Naive thymus-derived CD4-positive, alpha-beta T cell (primary cell): ENCODE measurements at regions of chr14 and their contacts with region 1.

Region 1: GRCh38 chr14:97458661-97459579 is 661.7 kb downstream of the VRK1 start:
- DNase-seq: peak; percentile 53 to 87 (median 81)
- ATAC-seq: peak; percentile 91
- H3K4me3 ChIP-seq: peak overlapping the region; percentile 85
- H3K4me3 Mint-ChIP-seq: peak overlapping the region; percentile 89 to 99 (median 92)
- H3K27ac ChIP-seq: peak overlapping the region; percentile 79
- H3K27ac Mint-ChIP-seq: peak overlapping the region; percentile 96 to 99 (median 98)
- H3K4me1 ChIP-seq: peaks cover 30 to 45% of the 10 kb centered on the region in 2 donors
- H3K4me1 Mint-ChIP-seq: peaks cover 33 to 79% (median 53%) of the 10 kb centered on the region in 7 donors
- H3K27me3 ChIP-seq: no peaks in the 10 kb centered on the region
- H3K27me3 Mint-ChIP-seq: no peaks in the 10 kb centered on the region

Region 2: GRCh38 chr14:97185186-97185585 is 273.7 kb before region 1 on chr14:
- CTCF ChIA-PET with region 1: no interaction called
- POLR2A ChIA-PET with region 1: no interaction called
- intact Hi-C with region 1: loop called in 1 of 2 experiments (anchors 5 kb)
- DNase-seq: peak in 6 of 9 donors; percentile 1 to 36 (median 30)
- ATAC-seq: peak; percentile 57
- H3K4me3 ChIP-seq: no peak overlapping the region
- H3K4me3 Mint-ChIP-seq: no peak overlapping the region
- H3K27ac ChIP-seq: no peak overlapping the region
- H3K27ac Mint-ChIP-seq: peak overlapping the region in 4 of 9 donors; percentile 7 to 53 (median 41)
- H3K4me1 ChIP-seq: no peaks in the 10 kb centered on the region
- H3K4me1 Mint-ChIP-seq: peaks cover 0 to 22% (median 6%) of the 10 kb centered on the region in 7 donors
- H3K27me3 ChIP-seq: no peaks in the 10 kb centered on the region
- H3K27me3 Mint-ChIP-seq: peaks cover 0 to 22% (median 0%) of the 10 kb centered on the region in 5 donors

Region 3: DNA sequence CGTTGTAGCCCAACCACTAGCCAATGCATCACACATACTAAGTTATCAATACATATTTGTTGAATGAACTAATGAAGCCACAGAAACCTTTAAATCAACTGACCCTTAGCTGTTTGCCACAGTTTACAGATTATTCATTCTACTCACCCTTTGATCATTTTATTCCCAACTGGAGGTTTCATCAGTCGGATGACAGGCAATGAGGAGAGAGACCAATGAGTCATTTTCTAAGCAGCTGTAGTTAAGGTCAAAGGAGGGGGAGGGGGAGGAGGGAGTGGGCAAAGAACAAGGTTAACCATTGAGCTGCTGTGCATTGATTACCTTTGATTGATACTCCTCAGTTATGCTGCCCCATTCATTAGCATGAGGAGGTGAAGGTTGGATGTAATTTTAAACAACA is 192.3 kb before region 1 on chr14:
- CTCF ChIA-PET with region 1: no interaction called
- POLR2A ChIA-PET with region 1: no interaction called
- intact Hi-C with region 1: no loop called
- DNase-seq: no peak
- ATAC-seq: no peak
- H3K4me3 ChIP-seq: no peak overlapping the region
- H3K4me3 Mint-ChIP-seq: no peak overlapping the region
- H3K27ac ChIP-seq: no peak overlapping the region
- H3K27ac Mint-ChIP-seq: no peak overlapping the region
- H3K4me1 ChIP-seq: no peaks in the 10 kb centered on the region
- H3K4me1 Mint-ChIP-seq: no peaks in the 10 kb centered on the region
- H3K27me3 ChIP-seq: no peaks in the 10 kb centered on the region
- H3K27me3 Mint-ChIP-seq: peaks cover 0 to 8% (median 0%) of the 10 kb centered on the region in 5 donors

Region 4: DNA sequence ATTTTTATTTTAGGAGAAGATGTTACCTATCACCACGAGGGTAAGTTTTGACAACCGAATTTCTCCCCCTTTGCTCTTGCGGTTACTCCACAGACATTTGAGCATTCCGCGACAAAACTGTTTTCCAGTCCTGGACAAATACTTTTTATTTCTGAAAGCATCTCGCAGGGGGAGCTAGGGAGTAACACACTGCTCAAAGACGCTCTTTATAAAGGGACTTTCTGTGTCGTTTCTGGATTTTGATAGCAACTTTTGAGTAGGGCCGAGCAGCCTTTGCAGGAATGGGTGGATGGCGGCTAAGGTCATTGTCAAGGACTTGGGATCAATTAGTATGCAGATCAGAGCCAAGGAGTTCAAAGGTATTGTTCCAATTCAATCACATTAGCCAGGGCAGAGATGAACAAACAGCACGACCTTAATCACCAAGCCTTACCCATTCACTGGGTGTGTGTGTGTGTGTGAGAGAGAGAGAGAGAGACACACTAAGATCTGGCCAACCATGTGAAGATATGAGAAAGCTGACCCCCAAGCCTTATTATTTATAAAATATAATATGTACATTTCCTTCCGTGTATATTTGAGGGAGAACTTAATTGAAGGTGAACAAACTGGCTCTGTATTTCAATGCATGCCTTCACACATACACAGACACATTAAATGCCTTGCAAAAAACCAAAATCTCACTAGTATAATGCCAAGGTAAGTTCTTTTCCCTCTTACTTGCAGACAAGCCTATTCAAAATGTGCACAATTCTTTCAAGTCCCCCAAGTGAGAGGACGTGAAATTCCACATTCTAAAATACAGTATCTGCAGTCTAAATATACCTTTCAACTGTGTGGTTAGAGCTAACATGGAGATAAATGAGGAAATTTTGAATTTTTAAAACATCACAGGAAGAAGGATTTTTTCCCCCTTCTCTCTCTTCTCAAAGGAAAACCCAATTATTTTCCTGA is 48.0 kb before region 1 on chr14:
- CTCF ChIA-PET with region 1: no interaction called
- POLR2A ChIA-PET with region 1: no interaction called
- intact Hi-C with region 1: loop called (anchors 1 kb)
- DNase-seq: peak in 1 of 9 donors; percentile 9
- ATAC-seq: no peak
- H3K4me3 ChIP-seq: no peak overlapping the region
- H3K4me3 Mint-ChIP-seq: no peak overlapping the region
- H3K27ac ChIP-seq: no peak overlapping the region
- H3K27ac Mint-ChIP-seq: no peak overlapping the region
- H3K4me1 ChIP-seq: peaks cover 15 to 34% of the 10 kb centered on the region in 2 donors
- H3K4me1 Mint-ChIP-seq: peaks cover 0 to 30% (median 21%) of the 10 kb centered on the region in 7 donors
- H3K27me3 ChIP-seq: peaks cover 0 to 6% of the 10 kb centered on the region in 2 donors
- H3K27me3 Mint-ChIP-seq: peaks cover 0 to 11% (median 1%) of the 10 kb centered on the region in 5 donors

Region 5: DNA sequence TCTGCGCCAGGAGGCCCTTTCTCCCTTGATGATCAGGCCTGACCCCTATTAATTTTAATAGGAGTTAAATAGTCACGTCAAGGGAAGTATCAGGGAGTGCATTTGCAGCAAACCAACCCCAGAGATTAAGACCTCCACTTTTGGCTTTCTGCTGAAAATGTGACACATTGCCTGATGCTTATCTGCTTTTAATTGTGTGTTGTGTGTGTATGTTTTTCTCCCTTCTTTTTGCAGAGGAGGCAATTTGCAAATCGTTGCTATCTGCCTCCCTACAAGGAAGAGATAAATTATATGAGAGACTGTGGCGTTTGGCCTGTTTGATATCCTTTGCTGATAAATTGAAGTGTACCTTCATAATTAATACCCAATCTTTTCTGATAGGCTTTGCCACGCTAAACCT is 161.1 kb after region 1 on chr14:
- CTCF ChIA-PET with region 1: no interaction called
- POLR2A ChIA-PET with region 1: no interaction called
- intact Hi-C with region 1: loop called in 1 of 2 experiments (anchors 5 kb)
- DNase-seq: peak in 1 of 9 donors; percentile 15
- ATAC-seq: no peak
- H3K4me3 ChIP-seq: peak overlapping the region; percentile 4
- H3K4me3 Mint-ChIP-seq: peak overlapping the region; percentile 72 to 95 (median 85)
- H3K27ac ChIP-seq: peak overlapping the region; percentile 76
- H3K27ac Mint-ChIP-seq: peak overlapping the region; percentile 95 to 100 (median 98)
- H3K4me1 ChIP-seq: peaks cover 37 to 38% of the 10 kb centered on the region in 2 donors
- H3K4me1 Mint-ChIP-seq: peaks cover 33 to 74% (median 58%) of the 10 kb centered on the region in 7 donors
- H3K27me3 ChIP-seq: no peaks in the 10 kb centered on the region
- H3K27me3 Mint-ChIP-seq: no peaks in the 10 kb centered on the region

Region 6: DNA sequence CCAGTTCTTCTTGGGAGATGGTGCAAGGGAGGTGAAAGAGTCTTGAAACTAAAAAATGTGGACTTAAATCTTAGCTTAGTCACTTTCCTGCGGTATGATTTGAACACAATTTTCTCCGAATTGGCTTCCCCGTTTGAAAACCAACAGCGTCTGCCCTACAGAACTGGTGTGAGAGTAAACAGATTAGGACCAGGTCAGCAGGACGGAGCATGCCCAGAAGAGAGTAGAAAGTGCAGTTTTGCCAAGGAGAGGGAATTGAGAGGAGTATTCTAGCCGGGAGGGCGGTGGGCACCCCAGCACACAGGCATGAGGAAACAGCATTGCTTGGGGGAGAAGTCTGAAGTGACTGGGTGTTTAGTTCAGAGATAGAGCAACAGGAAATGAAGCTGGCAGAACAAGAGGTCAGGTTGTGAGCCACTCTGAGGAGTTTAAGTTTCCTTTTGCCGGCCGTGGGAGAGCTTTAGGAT is 265.4 kb after region 1 on chr14:
- CTCF ChIA-PET with region 1: no interaction called
- POLR2A ChIA-PET with region 1: no interaction called
- intact Hi-C with region 1: loop called (anchors 5 kb)
- DNase-seq: peak in 8 of 9 donors; percentile 38 to 67 (median 59)
- ATAC-seq: peak; percentile 77
- H3K4me3 ChIP-seq: peak overlapping the region; percentile 57
- H3K4me3 Mint-ChIP-seq: peak overlapping the region; percentile 78 to 92 (median 84)
- H3K27ac ChIP-seq: peak overlapping the region; percentile 80
- H3K27ac Mint-ChIP-seq: peak overlapping the region; percentile 92 to 99 (median 97)
- H3K4me1 ChIP-seq: peaks cover 28 to 72% of the 10 kb centered on the region in 2 donors
- H3K4me1 Mint-ChIP-seq: peaks cover 51 to 94% (median 86%) of the 10 kb centered on the region in 7 donors
- H3K27me3 ChIP-seq: no peaks in the 10 kb centered on the region
- H3K27me3 Mint-ChIP-seq: no peaks in the 10 kb centered on the region

Region 7: DNA sequence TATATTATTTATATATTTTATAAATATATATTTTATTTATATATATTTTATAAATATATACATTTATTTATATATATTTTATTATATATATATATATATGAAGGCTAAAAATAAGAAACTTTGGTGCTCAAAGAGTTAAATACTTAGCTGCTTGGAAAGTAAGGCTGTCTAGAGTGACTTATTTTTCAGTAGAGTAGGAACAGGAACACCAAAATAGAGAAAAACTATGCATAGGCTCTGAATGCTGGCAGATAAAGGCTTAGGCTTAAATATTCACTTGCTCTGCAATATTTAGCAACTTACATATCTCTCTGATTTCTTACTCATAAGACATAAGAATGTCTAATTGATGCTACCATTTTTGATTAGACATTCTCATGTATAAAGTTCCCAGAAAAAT is 329.4 kb after region 1 on chr14:
- CTCF ChIA-PET with region 1: no interaction called
- POLR2A ChIA-PET with region 1: no interaction called
- intact Hi-C with region 1: loop called in 1 of 2 experiments (anchors 10 kb)
- DNase-seq: no peak
- ATAC-seq: no peak
- H3K4me3 ChIP-seq: no peak overlapping the region
- H3K4me3 Mint-ChIP-seq: no peak overlapping the region
- H3K27ac ChIP-seq: no peak overlapping the region
- H3K27ac Mint-ChIP-seq: peak overlapping the region in 2 of 9 donors; percentile 16 to 21
- H3K4me1 ChIP-seq: peaks cover 0 to 13% of the 10 kb centered on the region in 2 donors
- H3K4me1 Mint-ChIP-seq: peaks cover 8 to 38% (median 34%) of the 10 kb centered on the region in 7 donors
- H3K27me3 ChIP-seq: no peaks in the 10 kb centered on the region
- H3K27me3 Mint-ChIP-seq: no peaks in the 10 kb centered on the region